CD4-positive, alpha-beta T cell (primary cell): ENCODE measurements at regions of chr15 and their contacts with region 1.

Region 1: DNA sequence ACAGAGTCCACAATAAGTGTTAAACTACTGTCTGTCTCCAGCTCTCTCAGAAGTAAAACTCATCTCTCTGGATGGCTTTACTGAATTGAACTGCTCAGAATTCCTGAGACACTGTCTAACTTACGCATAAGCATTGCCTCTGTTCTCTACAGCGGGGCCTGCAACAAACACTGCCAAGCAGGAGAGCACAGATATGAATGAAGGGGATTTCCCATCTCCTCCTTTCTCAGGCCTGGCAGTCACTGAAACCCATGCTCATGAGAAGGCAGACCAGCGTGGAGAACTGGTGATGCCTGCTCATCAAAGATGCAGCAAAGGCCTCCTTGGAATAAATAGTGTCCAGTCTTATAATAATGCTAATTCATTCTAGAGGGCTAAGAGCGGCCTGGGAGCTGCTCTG is 10.3 kb downstream of the RASGRP1 start:
- DNase-seq: peak in 4 of 14 experiments; percentile 35 to 74 (median 56)
- ATAC-seq: peak; percentile 65
- H3K4me3 ChIP-seq: peak overlapping the region; percentile 4
- H3K4me3 Mint-ChIP-seq: peak overlapping the region; percentile 58
- H3K27ac ChIP-seq: peak overlapping the region; percentile 36 to 51
- H3K27ac Mint-ChIP-seq: peak overlapping the region; percentile 93
- H3K4me1 ChIP-seq: peaks cover 72% of the 10 kb centered on the region
- H3K4me1 Mint-ChIP-seq: peaks cover 94% of the 10 kb centered on the region
- H3K27me3 ChIP-seq: no peaks in the 10 kb centered on the region
- H3K27me3 Mint-ChIP-seq: no peaks in the 10 kb centered on the region
- CTCF ChIP-seq: no peak

Region 2: DNA sequence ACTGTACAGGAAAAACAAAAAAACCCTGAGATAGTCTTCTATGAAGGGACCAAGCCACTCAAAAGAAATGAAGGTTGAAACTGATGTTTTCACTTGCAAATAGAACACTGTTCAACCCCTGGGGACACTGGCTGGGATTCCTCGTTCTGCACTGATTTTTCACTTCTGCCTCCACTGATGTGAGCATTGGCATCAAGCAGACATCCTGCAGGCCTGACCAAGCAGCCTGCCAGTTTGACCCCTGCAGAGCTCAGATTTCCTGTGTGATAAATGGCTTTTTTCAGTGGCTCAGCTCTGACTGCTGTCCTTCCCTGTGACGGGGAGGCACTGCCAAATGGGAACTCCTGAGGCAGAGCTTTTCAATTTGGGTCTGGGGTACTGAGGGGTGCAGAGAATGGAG is 39.8 kb before region 1 on chr15:
- CTCF ChIA-PET with region 1: no interaction called
- POLR2A ChIA-PET with region 1: no interaction called
- intact Hi-C with region 1: loop called in 1 of 2 experiments (anchors 5 kb)
- DNase-seq: no peak
- ATAC-seq: no peak
- H3K4me3 ChIP-seq: no peak overlapping the region
- H3K4me3 Mint-ChIP-seq: no peak overlapping the region
- H3K27ac ChIP-seq: no peak overlapping the region
- H3K27ac Mint-ChIP-seq: peak overlapping the region; percentile 75
- H3K4me1 ChIP-seq: no peaks in the 10 kb centered on the region
- H3K4me1 Mint-ChIP-seq: peaks cover 8% of the 10 kb centered on the region
- H3K27me3 ChIP-seq: no peaks in the 10 kb centered on the region
- H3K27me3 Mint-ChIP-seq: no peaks in the 10 kb centered on the region
- CTCF ChIP-seq: no peak

Region 3: DNA sequence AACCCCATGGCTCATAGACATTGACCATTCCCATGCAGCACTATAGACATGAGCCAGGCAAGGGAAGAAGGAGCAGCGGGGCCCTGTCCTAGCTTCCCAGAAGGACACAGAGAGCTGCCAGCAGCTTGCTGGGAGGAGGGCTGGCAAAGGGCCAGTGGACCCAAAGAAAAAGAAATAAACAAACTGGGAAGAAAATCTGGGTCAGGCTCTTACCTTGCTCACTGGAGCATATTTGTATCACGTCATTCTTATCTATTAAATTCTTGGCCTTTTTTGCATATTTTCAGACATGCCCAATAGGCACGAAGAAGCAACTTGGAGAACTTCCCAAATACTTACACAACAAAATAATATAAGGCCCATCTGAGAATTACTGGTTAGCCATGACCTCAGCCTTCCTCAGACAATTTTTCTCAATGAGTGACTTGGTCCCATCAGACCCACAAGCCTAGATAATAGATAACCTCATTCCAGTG is 18.1 kb before region 1 on chr15:
- CTCF ChIA-PET with region 1: interaction called, 8 read pairs
- POLR2A ChIA-PET with region 1: interaction called, 9 read pairs
- intact Hi-C with region 1: loop called in 1 of 2 experiments (anchors 2 kb)
- DNase-seq: no peak
- ATAC-seq: no peak
- H3K4me3 ChIP-seq: no peak overlapping the region
- H3K4me3 Mint-ChIP-seq: peak overlapping the region; percentile 62
- H3K27ac ChIP-seq: no peak overlapping the region
- H3K27ac Mint-ChIP-seq: peak overlapping the region; percentile 80
- H3K4me1 ChIP-seq: peaks cover 86% of the 10 kb centered on the region
- H3K4me1 Mint-ChIP-seq: peaks cover 100% of the 10 kb centered on the region
- H3K27me3 ChIP-seq: no peaks in the 10 kb centered on the region
- H3K27me3 Mint-ChIP-seq: no peaks in the 10 kb centered on the region
- CTCF ChIP-seq: no peak

Region 4: DNA sequence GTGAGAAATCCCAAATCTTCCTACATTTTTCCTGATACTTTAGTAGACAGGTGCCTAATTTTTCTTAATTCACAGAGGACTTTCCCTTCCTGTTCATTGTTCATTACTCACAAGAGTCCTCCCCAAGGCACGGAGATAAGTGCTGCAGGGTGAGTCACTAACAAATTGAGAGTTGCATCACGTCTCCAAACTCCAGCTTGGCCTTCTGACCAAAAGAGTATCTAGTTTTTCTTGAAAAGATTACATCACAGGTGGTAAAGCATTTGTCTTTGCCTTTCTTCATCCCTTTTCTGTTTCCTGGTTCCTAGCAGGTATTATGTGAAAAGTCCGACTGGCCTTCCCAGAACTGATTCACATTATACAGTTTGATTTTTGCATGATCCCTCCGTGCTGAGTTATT is 35.1 kb after region 1 on chr15:
- CTCF ChIA-PET with region 1: no interaction called
- POLR2A ChIA-PET with region 1: no interaction called
- intact Hi-C with region 1: no loop called
- DNase-seq: no peak
- ATAC-seq: no peak
- H3K4me3 ChIP-seq: no peak overlapping the region
- H3K4me3 Mint-ChIP-seq: no peak overlapping the region
- H3K27ac ChIP-seq: no peak overlapping the region
- H3K27ac Mint-ChIP-seq: no peak overlapping the region
- H3K4me1 ChIP-seq: peaks cover 5% of the 10 kb centered on the region
- H3K4me1 Mint-ChIP-seq: peaks cover 22% of the 10 kb centered on the region
- H3K27me3 ChIP-seq: no peaks in the 10 kb centered on the region
- H3K27me3 Mint-ChIP-seq: no peaks in the 10 kb centered on the region
- CTCF ChIP-seq: no peak